IMR-90 (cell line): ENCODE measurements at regions of chr1 and their contacts with region 1.

Region 1: DNA sequence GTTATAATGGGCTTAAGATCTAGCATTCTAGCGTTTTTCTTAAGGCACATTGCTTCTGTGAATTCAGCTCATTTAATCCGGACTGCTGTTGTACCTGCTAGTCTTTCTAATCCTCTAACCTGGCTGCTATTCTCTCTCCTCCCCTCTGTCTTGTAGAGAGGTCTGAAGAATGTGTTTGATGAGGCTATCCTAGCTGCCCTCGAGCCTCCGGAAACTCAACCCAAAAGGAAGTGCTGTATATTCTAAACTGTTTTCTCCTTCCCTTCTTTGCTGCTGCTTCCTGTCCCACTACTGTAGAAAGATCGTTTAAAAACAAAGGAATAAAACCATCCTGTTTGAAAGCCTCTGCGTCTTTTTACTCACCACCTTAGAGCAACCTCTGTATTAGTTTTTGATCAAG is 37.3 kb downstream of the CDC42 start:
- DNase-seq: no peak
- ATAC-seq: peak; percentile 36; the same call in 1 of the 2 replicates
- H3K4me3 ChIP-seq: no peak overlapping the region
- H3K27ac ChIP-seq: no peak overlapping the region
- H3K4me1 ChIP-seq: peaks cover 17% of the 10 kb centered on the region
- H3K27me3 ChIP-seq: no peaks in the 10 kb centered on the region
- CTCF ChIP-seq: no peak
- POLR2A ChIP-seq: no peak
- RAD21 ChIP-seq: no peak

Region 2: DNA sequence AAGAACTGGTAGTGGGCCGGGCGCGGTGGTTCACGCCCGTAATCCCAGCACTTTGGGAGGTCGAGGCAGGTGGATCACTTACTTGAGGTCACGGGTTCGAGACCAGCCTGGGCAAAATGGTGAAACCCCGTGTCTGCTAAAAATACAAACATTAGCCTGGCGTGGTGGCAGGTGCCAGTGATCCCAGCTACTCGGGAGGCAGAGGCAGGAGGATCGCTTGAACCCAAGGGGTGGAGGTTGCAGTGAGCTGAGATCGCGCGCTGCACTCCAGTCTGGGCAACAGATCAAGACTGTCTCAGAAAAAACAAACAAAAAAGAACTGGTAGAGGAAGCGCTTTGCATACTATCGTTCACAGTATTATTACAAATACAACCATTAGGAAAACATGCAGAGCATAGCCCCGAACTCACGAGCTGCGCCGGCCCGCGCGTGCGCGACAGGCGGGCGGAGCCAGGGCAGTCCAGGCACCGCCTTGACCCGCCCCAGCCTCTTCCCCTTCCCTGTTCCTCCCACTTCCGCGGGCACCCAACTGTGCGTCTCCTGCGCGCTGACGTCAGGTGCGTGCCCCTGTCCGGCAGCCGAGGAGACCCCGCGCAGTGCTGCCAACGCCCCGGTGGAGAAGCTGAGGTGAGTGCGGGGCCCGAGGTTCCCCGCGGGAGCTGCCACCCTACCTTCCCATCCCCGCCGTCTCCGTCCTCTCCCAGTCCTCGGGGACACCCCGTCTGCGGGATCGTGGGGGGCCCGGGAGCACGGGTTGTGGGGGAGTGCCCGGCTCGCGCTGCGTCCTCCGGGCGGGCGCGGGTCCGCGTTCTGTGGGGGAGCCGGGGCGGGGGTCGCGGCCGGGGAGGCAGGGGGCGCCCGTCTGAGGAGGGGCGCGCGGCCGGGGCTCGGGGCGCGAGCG is 37.4 kb before region 1 on chr1 and contains the start of gene CDC42:
- CTCF ChIA-PET with region 1: no interaction called
- POLR2A ChIA-PET with region 1: no interaction called
- dilution Hi-C with region 1: no loop called
- in situ Hi-C with region 1: no loop called
- intact Hi-C with region 1: loop called (anchors 5 kb)
- DNase-seq: peak; percentile 94
- ATAC-seq: peak; percentile 96
- H3K4me3 ChIP-seq: peak within 1 kb of the TSS; percentile 98
- H3K27ac ChIP-seq: peak within 1 kb of the TSS; percentile 98
- H3K4me1 ChIP-seq: peaks cover 7% of the 10 kb centered on the region
- H3K27me3 ChIP-seq: 0 out of 2 replicates have a peak, but pooled peaks cover 2% of the 10 kb centered on the region
- CTCF ChIP-seq: no peak
- POLR2A ChIP-seq: peak; percentile 97
- RAD21 ChIP-seq: no peak
- total RNA-seq, gene CDC42: 609 and 676 TPM in 2 replicates

Region 3: GRCh38 chr1:22257290-22258275 is 167.8 kb after region 1 on chr1:
- CTCF ChIA-PET with region 1: no interaction called
- POLR2A ChIA-PET with region 1: interaction called, 16 read pairs
- dilution Hi-C with region 1: no loop called
- in situ Hi-C with region 1: no loop called
- intact Hi-C with region 1: no loop called
- DNase-seq: no peak
- ATAC-seq: peak; percentile 56
- H3K4me3 ChIP-seq: no peak overlapping the region
- H3K27ac ChIP-seq: peak overlapping the region; percentile 43; the same call in 1 of the 2 replicates
- H3K4me1 ChIP-seq: peaks cover 14% of the 10 kb centered on the region; the same call in 1 of the 2 replicates
- H3K27me3 ChIP-seq: peaks cover 26% of the 10 kb centered on the region
- CTCF ChIP-seq: no peak
- POLR2A ChIP-seq: no peak
- RAD21 ChIP-seq: no peak